HepG2 (cell line): ENCODE measurements at regions of chr9 and their contacts with region 1.

Region 1: DNA sequence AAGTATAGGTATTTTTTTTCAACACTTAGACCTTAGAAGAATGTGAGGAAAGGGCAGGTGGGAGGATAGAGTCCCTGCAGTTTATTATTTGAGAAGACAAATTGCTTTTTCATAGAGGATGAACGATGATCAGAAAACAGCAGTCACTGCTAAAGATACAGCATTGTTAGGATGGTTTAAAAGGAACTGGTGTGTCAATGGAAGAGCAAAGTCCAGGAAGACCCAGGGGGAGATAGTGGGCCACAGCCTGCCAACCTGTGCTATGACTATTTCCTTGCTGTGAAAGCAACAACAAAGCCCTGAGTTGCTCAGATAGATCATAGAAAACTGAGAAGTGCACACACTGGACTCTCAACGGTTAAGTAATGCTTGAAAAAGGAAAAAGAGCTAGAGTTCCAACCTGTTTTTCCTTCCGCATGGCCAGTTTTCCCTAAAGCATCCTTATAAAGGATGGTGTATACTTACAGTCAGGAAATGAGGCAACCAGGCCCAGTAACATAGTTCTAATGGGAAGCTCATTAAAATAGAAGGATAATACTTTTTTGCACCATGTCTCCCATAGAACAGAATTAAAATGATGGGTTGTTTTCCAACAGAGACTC is 153.8 kb downstream of the CEMIP2 start:
- DNase-seq: peak; percentile 43
- ATAC-seq: peak; percentile 60
- H3K4me3 ChIP-seq: no peak overlapping the region
- H3K27ac ChIP-seq: no peak overlapping the region
- H3K4me1 ChIP-seq: peaks cover 29% of the 10 kb centered on the region
- H3K27me3 ChIP-seq: no peaks in the 10 kb centered on the region
- CTCF ChIP-seq: no peak
- EP300 ChIP-seq: no peak
- POLR2A ChIP-seq: no peak
- RAD21 ChIP-seq: no peak

Region 2: DNA sequence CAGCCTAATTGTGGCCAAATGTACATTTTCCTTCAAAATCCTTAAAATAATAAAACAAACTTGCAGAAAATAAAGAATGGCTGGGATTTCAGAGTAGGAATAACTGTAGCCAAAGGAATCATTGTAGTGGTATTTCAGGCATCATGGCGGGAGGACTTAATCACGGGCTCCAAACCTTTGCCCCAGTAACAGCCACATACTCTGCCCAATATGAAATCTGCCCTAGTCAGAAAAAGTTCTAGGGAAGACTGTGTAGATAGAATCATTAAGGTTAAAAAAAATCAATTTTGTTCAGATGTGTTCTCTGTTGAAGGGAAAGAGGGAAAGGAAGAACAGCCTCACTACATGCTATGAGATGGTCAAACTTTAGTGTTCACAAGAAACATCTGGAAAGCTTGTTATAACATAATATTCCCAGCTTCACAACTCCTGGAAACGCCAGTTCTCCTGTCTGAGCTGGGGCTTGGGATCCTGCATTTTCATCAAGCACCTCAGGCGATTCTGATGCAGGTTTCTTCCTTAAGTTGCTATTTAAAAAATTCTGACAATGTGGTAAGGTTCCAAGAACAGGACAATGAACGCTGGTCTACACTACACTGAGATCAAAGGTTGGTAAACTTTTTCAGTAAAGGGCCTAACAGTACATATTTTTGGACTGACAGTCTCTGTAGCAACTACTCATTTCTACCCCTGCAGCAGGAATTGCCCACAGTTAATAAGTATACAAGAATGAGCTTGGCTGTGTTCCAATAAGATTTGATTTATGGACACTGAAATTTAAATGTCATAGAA is 65.9 kb after region 1 on chr9:
- CTCF ChIA-PET with region 1: no interaction called
- POLR2A ChIA-PET with region 1: no interaction called
- in situ Hi-C with region 1: no loop called
- intact Hi-C with region 1: loop called (anchors 1 kb)
- DNase-seq: peak; percentile 90
- ATAC-seq: peak; percentile 76
- H3K4me3 ChIP-seq: peak overlapping the region in 1 of 3 experiments; percentile 19; a peak in 1 of 6 replicates
- H3K27ac ChIP-seq: peak overlapping the region; percentile 94
- H3K4me1 ChIP-seq: peaks cover 74% of the 10 kb centered on the region
- H3K27me3 ChIP-seq: no peaks in the 10 kb centered on the region
- CTCF ChIP-seq: no peak
- EP300 ChIP-seq: peak; percentile 15 to 67; a peak in 2 of 4 replicates
- POLR2A ChIP-seq: no peak
- RAD21 ChIP-seq: no peak